Spleen (tissue), 13 donors: ENCODE measurements at regions of chr20 and their contacts with region 1.

Region 1: DNA sequence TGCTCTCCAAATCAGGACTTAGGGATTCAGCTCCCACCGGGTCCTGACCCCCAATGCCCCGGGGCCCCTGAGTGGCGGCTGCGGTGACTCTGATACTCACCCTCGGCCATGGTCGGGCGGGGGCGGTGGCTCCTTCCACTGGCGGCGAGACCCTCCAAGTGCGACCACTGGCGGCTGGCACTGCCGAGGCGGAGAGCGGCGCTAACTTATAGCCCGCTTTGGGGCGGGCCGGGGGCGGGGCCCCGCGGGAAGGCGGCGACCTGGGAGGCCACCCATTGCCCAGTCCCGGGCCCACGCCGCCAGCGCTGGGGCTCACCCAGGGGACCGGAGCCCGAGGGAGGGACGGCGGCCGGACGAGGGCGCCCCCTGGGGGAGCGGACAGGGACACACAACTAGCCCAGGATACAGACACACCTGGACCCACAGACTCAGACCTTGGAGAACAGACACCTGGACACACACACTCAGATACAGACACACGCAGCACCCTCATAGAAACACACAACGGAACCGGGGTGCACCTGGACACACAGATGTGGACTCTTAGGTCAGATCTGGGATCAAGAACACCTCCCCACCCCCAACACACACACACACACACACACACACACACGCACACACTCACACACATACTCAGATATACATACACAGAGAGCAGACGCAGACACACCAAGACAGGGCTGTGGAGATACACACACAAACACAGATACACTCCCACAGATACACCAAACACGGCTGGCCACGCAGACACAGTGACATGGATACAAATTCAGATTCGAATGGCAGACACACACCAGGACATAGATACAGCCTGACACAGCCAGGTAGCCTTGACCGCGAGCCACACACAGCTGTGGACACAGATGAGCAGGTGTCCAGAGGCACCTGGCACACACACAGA is at the start of gene TGM2:
- DNase-seq: peak; percentile 94
- H3K4me3 ChIP-seq: peak within 1 kb of the TSS; percentile 29 to 70 (median 38)
- H3K27ac ChIP-seq: peak within 1 kb of the TSS in 7 of 8 donors; percentile 29 to 88 (median 60)
- H3K4me1 ChIP-seq: peaks cover 14 to 98% (median 66%) of the 10 kb centered on the region in 6 donors
- H3K27me3 ChIP-seq: peaks cover 0 to 10% (median 0%) of the 10 kb centered on the region in 7 donors
- CTCF ChIP-seq: peak; percentile 65 to 93 (median 87)
- POLR2A ChIP-seq: no peak
- total RNA-seq, gene TGM2: 60.2 to 167 (median 87.6) TPM

Region 2: GRCh38 chr20:38001173-38001872 is 164.0 kb before region 1 on chr20:
- intact Hi-C with region 1: no loop called
- DNase-seq: no peak
- H3K4me3 ChIP-seq: no peak overlapping the region
- H3K27ac ChIP-seq: no peak overlapping the region
- H3K4me1 ChIP-seq: peaks cover 0 to 5% (median 0%) of the 10 kb centered on the region in 6 donors
- H3K27me3 ChIP-seq: no peaks in the 10 kb centered on the region
- CTCF ChIP-seq: no peak
- POLR2A ChIP-seq: no peak

Region 3: GRCh38 chr20:38073307-38074071 is 91.8 kb before region 1 on chr20:
- intact Hi-C with region 1: loop called (anchors 5 kb)
- DNase-seq: no peak
- H3K4me3 ChIP-seq: no peak overlapping the region
- H3K27ac ChIP-seq: peak overlapping the region in 7 of 8 donors; percentile 7 to 68 (median 39)
- H3K4me1 ChIP-seq: peaks cover 0 to 60% (median 20%) of the 10 kb centered on the region in 6 donors
- H3K27me3 ChIP-seq: no peaks in the 10 kb centered on the region
- CTCF ChIP-seq: peak; percentile 47 to 80 (median 73)
- POLR2A ChIP-seq: no peak

Region 4: GRCh38 chr20:38373231-38373867 is 208.0 kb after region 1 on chr20:
- intact Hi-C with region 1: no loop called
- DNase-seq: no peak
- H3K4me3 ChIP-seq: no peak overlapping the region
- H3K27ac ChIP-seq: peak overlapping the region in 7 of 8 donors; percentile 5 to 81 (median 75)
- H3K4me1 ChIP-seq: peaks cover 0 to 10% (median 0%) of the 10 kb centered on the region in 6 donors
- H3K27me3 ChIP-seq: no peaks in the 10 kb centered on the region
- CTCF ChIP-seq: no peak
- POLR2A ChIP-seq: no peak